Pancreas (tissue), 10 donors: ENCODE measurements at regions of chr11 and their contacts with region 1.

Region 1: DNA sequence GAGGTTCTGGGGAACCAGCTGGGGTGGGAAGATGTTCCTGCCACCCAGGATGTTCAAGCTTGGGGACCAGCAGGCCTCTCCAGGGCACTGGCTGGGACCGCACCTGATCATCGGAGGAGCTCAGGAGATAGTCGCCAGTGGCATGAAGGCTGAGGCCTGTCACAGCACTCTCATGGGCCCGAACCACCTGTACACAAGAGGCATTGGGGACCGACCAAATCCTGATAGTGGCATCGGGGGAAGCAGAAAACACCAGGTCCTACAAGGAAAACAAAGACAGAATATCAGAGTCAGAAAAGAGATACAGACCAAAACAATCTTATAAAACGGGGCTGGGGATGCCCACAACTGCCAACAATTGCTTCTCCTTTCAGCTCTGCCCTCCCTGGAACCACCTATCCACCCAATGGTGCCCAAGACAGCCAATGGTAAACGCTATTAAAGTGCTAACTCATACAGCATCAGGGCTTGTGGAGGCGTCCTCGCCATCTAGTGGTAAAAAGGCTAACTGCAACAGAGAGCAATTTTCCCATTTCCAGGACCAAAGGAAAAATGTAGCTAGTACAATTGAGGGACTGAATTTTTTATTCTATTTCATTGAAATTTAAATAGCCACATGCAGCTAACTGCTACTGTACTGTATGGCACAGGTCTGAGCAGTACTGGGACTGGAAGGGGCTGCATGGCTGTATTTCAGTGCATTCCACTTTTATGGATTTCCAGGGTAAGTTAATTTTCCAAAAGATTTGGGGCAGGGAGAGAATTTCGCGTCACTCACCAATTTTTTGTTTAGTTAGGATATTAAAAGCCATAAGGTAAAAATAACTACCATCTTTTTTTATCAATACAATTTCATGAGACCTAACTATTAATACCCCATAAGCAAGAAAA is 7.1 kb downstream of the PRPF19 start:
- DNase-seq: peak in 2 of 6 donors; percentile 22 to 54
- ATAC-seq: peak; percentile 61 to 90 (median 86)
- H3K4me3 ChIP-seq: no peak overlapping the region
- H3K27ac ChIP-seq: no peak overlapping the region
- H3K4me1 ChIP-seq: peaks cover 0 to 6% (median 2%) of the 10 kb centered on the region in 3 donors
- H3K27me3 ChIP-seq: no peaks in the 10 kb centered on the region
- CTCF ChIP-seq: peak; percentile 76 to 89 (median 88)

Region 2: DNA sequence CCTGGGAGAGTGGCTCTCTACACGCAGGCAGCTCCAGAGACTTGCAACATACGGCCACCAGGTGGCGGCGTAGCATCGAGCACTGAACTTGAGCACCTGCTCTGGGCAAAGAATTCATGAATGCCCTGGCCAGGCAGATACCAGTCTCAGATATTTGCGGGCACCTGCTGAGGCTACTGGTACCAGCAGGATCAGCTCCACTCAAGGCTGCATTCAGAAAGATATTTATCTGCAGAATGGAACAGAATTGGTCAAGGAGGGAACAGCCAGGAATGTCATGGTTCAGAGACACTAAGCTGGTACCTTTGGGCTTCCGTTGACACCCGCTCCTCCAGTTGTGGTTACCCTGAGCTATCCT is 68.2 kb before region 1 on chr11:
- intact Hi-C with region 1: loop called in 2 of 3 experiments (anchors 5 kb)
- DNase-seq: peak; percentile 67 to 92 (median 82)
- ATAC-seq: peak; percentile 91 to 99 (median 98)
- H3K4me3 ChIP-seq: no peak overlapping the region
- H3K27ac ChIP-seq: no peak overlapping the region
- H3K4me1 ChIP-seq: no peaks in the 10 kb centered on the region
- H3K27me3 ChIP-seq: no peaks in the 10 kb centered on the region
- CTCF ChIP-seq: peak; percentile 82 to 88 (median 84)

Region 3: DNA sequence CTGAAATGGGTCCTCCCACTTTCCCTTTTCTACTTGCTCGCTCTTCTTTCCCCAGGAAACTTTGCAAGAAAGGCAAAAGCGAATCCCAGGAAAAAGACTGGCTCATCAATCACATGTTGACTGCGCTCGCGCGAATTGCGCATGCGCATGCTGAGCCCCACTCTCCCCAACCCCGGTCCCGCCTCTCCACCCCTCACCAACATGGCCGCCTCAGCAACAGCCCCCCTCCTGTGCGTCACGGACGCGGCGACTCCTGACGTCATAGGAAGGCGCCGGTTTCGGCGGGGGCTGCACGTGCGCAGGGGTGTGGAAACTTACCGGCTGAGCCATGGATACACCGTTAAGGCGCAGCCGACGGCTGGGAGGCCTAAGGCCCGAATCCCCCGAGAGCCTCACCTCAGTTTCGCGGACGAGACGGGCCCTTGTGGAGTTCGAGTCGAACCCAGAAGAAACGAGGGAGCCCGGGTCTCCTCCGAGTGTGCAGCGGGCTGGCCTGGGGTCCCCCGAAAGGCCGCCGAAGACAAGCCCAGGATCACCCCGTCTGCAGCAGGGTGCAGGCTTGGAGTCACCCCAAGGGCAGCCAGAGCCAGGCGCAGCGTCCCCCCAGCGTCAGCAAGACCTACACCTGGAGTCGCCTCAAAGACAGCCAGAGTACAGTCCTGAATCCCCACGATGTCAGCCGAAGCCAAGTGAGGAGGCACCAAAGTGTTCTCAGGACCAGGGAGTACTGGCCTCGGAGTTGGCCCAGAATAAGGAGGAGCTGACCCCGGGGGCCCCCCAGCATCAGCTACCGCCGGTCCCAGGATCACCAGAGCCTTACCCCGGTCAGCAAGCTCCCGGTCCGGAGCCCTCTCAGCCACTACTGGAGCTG is 57.3 kb before region 1 on chr11 and contains the start of gene CCDC86:
- intact Hi-C with region 1: loop called in 2 of 3 experiments (anchors 5 to 10 kb)
- DNase-seq: peak; percentile 95 to 99 (median 97)
- ATAC-seq: peak; percentile 93 to 97 (median 94)
- H3K4me3 ChIP-seq: peak within 1 kb of the TSS; percentile 63 to 95 (median 94)
- H3K27ac ChIP-seq: peak within 1 kb of the TSS; percentile 39 to 71 (median 69)
- H3K4me1 ChIP-seq: peaks cover 6 to 20% (median 6%) of the 10 kb centered on the region in 3 donors
- H3K27me3 ChIP-seq: no peaks in the 10 kb centered on the region
- CTCF ChIP-seq: no peak
- total RNA-seq, gene CCDC86: 6.3 to 16.9 (median 11.0) TPM